Dendritic cell treated with granulocyte-macrophage colony-stimulating factor and Interleukin-4, amounts not matched to agents 40 ng/mL and 50 ng/mL, for 4 days (primary cell): ENCODE measurements at regions of chr3 and their contacts with region 1.

Region 1: DNA sequence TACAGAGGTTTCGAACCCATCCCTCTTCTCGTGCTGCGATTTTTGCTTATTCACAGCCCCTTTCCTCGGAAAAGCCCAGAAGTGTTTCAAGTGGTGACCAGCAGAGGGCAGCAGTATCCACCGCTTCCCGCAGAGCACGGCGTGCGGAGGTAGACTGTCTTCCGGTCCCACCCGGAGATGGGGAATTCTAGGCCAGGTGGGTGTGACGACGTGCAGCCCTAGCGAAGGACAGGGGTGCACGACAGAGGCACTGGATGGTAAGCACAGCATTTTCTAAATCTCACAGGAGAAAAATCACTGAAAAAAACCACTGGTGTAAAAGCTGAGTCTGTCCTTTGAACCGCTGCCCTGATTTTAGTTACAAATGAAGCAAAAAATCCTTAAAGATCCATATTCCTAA is 7.4 kb upstream of the PSMD6 start:
- H3K4me3 Mint-ChIP-seq: peak overlapping the region; percentile 68
- H3K27ac Mint-ChIP-seq: no peak overlapping the region
- H3K4me1 Mint-ChIP-seq: peaks cover 5% of the 10 kb centered on the region
- H3K27me3 Mint-ChIP-seq: peaks cover 49% of the 10 kb centered on the region

Region 2: DNA sequence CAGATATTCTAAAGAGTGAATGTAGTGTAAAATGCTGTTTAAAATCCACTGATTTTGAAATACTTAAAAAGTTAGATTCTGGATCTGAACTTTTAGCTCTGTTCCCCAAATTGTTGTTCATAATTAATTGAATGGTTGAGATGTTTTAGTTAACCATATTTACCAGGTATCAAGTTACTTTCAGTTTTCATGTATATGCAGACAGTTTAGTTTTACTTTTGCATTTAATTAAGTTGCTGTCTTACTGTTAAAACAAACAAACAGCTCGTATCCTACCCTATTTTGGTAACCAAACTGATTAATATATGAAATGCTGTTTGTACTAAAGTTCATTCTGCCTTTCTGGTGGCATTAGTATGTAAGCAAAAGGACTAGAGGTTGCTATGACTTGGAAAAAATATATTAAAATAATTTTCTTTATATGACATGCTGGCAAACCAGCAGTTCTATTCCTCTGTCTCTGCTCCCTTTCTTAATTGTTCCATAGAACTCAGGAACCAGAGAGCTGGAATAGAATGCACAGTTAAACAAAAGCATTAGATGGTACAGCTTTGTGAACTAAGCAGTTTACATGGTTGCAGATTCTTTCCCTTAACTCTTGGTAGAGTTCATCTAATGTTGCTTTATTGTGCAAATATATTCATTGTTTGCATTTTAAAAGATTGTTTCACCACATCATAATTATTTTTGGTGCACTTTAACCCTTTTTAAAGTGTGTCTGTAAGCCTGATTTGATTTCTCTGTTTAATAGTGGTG is 79.1 kb before region 1 on chr3:
- intact Hi-C with region 1: no loop called
- H3K4me3 Mint-ChIP-seq: no peak overlapping the region
- H3K27ac Mint-ChIP-seq: no peak overlapping the region
- H3K4me1 Mint-ChIP-seq: peaks cover 18% of the 10 kb centered on the region
- H3K27me3 Mint-ChIP-seq: no peaks in the 10 kb centered on the region

Region 3: DNA sequence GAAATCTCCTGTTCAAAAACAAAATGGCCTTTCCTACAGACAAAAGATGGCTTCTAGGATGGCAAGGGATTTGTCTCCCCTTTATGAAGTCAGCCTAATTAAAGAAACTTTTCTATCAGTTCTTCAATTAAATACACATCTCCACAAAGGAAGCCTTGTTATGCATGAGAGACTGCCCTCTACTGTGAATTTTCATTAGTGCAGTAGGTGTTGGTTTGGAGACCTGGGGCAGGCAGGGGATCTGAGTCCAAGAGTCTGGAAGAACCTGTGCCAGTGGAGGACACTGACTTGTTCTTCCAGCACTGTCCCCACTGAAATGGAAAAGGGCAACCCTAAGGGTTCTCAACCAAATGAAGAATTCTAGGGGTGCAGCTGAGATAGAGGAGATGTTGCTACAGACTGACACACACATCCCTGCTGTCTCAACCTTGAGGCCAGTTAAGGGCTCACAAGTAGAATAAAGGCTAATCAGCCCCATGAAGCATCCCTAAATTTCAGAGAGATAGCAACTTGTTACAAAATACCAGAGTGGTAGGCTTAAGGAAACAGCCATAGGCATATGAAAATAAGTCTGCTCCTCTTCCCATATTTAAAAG is 368.6 kb after region 1 on chr3:
- intact Hi-C with region 1: loop called (anchors 2 kb)
- H3K4me3 Mint-ChIP-seq: no peak overlapping the region
- H3K27ac Mint-ChIP-seq: no peak overlapping the region
- H3K4me1 Mint-ChIP-seq: no peaks in the 10 kb centered on the region
- H3K27me3 Mint-ChIP-seq: no peaks in the 10 kb centered on the region

Region 4: GRCh38 chr3:64484289-64484992 is 453.7 kb after region 1 on chr3:
- intact Hi-C with region 1: loop called (anchors 1 kb)
- H3K4me3 Mint-ChIP-seq: no peak overlapping the region
- H3K27ac Mint-ChIP-seq: no peak overlapping the region
- H3K4me1 Mint-ChIP-seq: no peaks in the 10 kb centered on the region
- H3K27me3 Mint-ChIP-seq: peaks cover 13% of the 10 kb centered on the region